ENCODE measurements at regions of chr12 and their contacts with region 1.

Region 1: GRCh38 chr12:47307680-47308399 is 228.1 kb upstream of the AMIGO2 start:
- DNase-seq: peak; percentile 68
- H3K4me3 Mint-ChIP-seq: peak overlapping the region; percentile 78
- H3K27ac Mint-ChIP-seq: peak overlapping the region; percentile 87
- H3K4me1 Mint-ChIP-seq: peaks cover 49% of the 10 kb centered on the region
- H3K27me3 Mint-ChIP-seq: no peaks in the 10 kb centered on the region

Region 2: DNA sequence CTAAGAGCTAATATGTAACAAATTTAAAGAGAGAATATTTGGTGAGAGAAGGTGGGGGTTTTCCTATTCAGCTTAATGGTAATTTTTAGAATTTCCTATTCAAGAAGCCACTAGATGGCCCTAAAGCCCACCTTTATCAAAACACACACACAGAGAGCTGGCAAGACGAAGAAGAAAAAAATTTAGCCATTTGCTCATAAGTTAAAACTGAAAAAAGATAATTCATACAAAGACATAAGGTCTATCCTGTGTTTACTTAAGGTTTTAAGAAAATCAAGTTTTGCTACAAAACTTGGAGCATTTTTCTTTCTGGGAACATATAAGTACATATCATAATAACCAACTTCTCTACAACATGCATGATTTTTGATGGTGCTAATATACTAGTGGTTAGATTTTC is 275.2 kb before region 1 on chr12:
- CTCF ChIA-PET with region 1: interaction called, 21 read pairs
- DNase-seq: peak; percentile 22
- H3K4me3 Mint-ChIP-seq: no peak overlapping the region
- H3K27ac Mint-ChIP-seq: no peak overlapping the region
- H3K4me1 Mint-ChIP-seq: peaks cover 19% of the 10 kb centered on the region
- H3K27me3 Mint-ChIP-seq: no peaks in the 10 kb centered on the region

Region 3: GRCh38 chr12:47079468-47079980 is 228.3 kb before region 1 on chr12 and contains the starts of genes AMIGO2 and PCED1B:
- CTCF ChIA-PET with region 1: interaction called, 18 read pairs
- DNase-seq: peak; percentile 78
- H3K4me3 Mint-ChIP-seq: peak within 1 kb of the TSS; percentile 94
- H3K27ac Mint-ChIP-seq: peak within 1 kb of the TSS; percentile 87
- H3K4me1 Mint-ChIP-seq: peaks cover 71% of the 10 kb centered on the region
- H3K27me3 Mint-ChIP-seq: peaks cover 8% of the 10 kb centered on the region

Region 4: DNA sequence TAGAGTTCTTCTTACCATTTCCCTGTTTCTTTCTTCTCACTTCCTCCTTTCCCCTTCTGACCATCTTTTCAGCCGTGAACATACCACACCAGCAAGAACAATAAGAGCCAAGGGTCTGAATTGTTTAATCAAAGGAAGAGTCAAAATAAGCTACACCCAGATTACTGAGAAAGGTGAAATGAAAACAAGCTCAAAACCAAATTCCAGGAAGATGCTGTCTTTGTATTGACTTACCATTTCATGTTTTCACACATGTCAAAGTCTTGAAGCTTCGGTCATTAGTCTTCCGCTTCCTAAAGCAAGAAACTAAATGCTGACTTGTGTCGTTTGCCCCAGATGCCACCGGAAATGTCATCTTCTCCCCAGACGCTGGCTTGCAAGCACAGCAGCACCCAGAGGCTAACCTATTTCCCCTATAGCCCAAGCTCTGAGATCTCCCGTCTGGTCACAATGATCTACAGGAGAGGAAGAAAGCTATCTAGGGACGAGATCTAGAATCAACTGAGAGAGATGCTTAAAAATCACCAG is 91.6 kb before region 1 on chr12:
- CTCF ChIA-PET with region 1: interaction called, 13 read pairs
- DNase-seq: peak; percentile 88
- H3K4me3 Mint-ChIP-seq: peak overlapping the region; percentile 81
- H3K27ac Mint-ChIP-seq: peak overlapping the region; percentile 95
- H3K4me1 Mint-ChIP-seq: peaks cover 16% of the 10 kb centered on the region
- H3K27me3 Mint-ChIP-seq: no peaks in the 10 kb centered on the region

Region 5: GRCh38 chr12:47286676-47287075 is 21.2 kb before region 1 on chr12:
- CTCF ChIA-PET with region 1: no interaction called
- DNase-seq: no peak
- H3K4me3 Mint-ChIP-seq: no peak overlapping the region
- H3K27ac Mint-ChIP-seq: no peak overlapping the region
- H3K4me1 Mint-ChIP-seq: peaks cover 12% of the 10 kb centered on the region
- H3K27me3 Mint-ChIP-seq: no peaks in the 10 kb centered on the region

Region 6: DNA sequence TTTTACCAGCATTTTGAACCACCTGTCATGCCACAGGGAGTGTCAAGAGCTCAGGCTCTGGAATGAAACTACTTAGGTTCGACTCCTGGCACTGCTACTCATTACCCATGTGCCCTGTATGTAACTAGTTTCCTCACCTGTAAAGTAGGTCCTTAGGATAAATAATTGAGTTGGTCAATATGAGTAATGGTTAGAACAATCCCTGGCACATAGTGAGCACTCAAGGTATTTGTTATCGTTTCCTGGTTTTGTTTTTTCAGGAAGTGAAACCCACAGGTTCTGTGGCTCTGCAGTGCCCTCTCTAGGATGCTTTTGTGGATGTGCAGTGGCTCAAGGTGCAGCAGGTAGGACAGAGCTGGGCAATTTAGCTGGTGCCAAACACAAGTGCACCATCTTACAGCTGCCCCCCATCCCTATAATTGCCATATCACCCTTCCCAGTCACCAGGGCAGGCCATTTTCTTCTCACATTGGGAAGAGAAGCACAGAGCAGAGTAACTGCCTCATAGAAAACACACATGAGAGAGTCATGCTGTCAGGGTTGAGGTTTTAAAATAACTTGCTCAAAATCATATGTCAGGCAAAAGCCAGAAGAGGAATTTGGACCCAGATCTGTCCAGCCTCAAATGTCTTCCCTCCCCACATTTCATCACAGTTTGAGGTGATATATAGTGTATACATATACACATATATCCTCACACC is 100.5 kb after region 1 on chr12:
- CTCF ChIA-PET with region 1: interaction called, 12 read pairs
- DNase-seq: peak; percentile 68
- H3K4me3 Mint-ChIP-seq: no peak overlapping the region
- H3K27ac Mint-ChIP-seq: peak overlapping the region; percentile 73
- H3K4me1 Mint-ChIP-seq: peaks cover 55% of the 10 kb centered on the region
- H3K27me3 Mint-ChIP-seq: peaks cover 4% of the 10 kb centered on the region

Measured in activated naive CD4-positive, alpha-beta T cell treated with anti-CD3 and anti-CD28 coated beads, Interleukin-2, amount 10 ng/mL, durations not matched to agents 7 days and 5 days (primary cell).